ENCODE measurements at regions of chr2 and their contacts with region 1.

Region 1: GRCh38 chr2:195533771-195534642 is 123.0 kb upstream of the SLC39A10 start:
- DNase-seq: peak; percentile 10 to 72 (median 43)
- H3K4me3 ChIP-seq: peak overlapping the region; percentile 65
- H3K4me3 Mint-ChIP-seq: peak overlapping the region; percentile 75 to 86 (median 79)
- H3K27ac ChIP-seq: peak overlapping the region; percentile 19
- H3K27ac Mint-ChIP-seq: peak overlapping the region; percentile 83 to 97 (median 92)
- H3K4me1 ChIP-seq: peaks cover 78% of the 10 kb centered on the region
- H3K4me1 Mint-ChIP-seq: peaks cover 83 to 89% (median 89%) of the 10 kb centered on the region in 3 donors
- H3K27me3 ChIP-seq: no peaks in the 10 kb centered on the region
- H3K27me3 Mint-ChIP-seq: no peaks in the 10 kb centered on the region

Region 2: DNA sequence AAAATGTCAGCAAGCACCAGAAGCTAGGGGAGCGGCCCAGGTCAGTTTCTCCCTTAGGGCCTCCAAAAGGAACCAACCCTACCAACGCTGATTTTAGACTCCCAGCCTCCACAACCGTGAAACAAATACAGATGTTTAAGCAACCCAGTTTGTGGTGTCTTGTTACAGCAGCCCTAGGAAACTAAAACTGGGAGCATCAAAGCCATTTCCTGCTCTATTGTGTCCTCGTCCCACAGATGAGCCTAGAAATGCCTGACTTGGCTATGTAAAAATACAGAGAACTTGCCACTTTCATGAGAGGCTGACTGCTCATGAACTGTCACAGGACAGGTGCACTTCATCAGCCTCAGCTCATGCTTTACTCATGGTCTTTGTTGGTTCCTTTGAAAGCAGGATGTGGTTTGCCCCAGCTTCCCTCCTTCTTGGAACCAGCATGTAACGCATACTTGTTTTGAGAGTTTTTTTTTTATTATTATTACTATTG is 25.5 kb after region 1 on chr2:
- CTCF ChIA-PET with region 1: interaction called, 24 read pairs
- POLR2A ChIA-PET with region 1: interaction called, 56 read pairs
- DNase-seq: peak; percentile 46 to 87 (median 84)
- H3K4me3 ChIP-seq: no peak overlapping the region
- H3K4me3 Mint-ChIP-seq: peak overlapping the region; percentile 38 to 84 (median 73)
- H3K27ac ChIP-seq: peak overlapping the region; percentile 15
- H3K27ac Mint-ChIP-seq: peak overlapping the region; percentile 69 to 97 (median 94)
- H3K4me1 ChIP-seq: peaks cover 77% of the 10 kb centered on the region
- H3K4me1 Mint-ChIP-seq: peaks cover 62 to 79% (median 78%) of the 10 kb centered on the region in 3 donors
- H3K27me3 ChIP-seq: no peaks in the 10 kb centered on the region
- H3K27me3 Mint-ChIP-seq: no peaks in the 10 kb centered on the region

Region 3: DNA sequence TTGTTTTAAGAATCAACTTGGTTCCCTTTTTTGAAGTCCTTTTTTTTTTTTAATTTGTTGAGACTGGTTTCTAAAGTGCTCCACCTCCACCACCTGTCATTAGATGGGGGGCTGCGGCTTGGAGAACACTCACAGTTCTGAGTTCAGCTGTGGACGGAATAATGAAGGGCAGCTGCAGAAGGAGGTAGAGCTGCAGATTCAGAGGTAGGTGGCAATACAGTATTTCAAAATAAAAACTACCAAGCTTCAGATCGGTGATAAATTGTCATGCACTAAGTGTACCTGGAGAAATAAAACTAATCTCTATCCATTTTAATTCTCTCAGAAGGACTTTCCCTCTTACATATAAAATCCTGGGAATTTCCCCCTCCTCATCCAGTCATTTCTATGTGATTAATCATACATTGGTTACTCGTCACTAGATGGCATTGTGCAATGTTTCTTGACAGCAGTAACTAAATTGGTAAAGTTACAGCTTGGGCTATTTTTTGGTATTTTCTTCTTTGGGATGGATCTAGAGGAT is 41.9 kb after region 1 on chr2:
- CTCF ChIA-PET with region 1: interaction called, 11 read pairs
- POLR2A ChIA-PET with region 1: no interaction called
- DNase-seq: peak in 1 of 5 donors; percentile 21
- H3K4me3 ChIP-seq: no peak overlapping the region
- H3K4me3 Mint-ChIP-seq: peak overlapping the region in 6 of 7 donors; percentile 26 to 80 (median 52)
- H3K27ac ChIP-seq: no peak overlapping the region
- H3K27ac Mint-ChIP-seq: peak overlapping the region in 7 of 8 donors; percentile 18 to 84 (median 23)
- H3K4me1 ChIP-seq: peaks cover 49% of the 10 kb centered on the region
- H3K4me1 Mint-ChIP-seq: peaks cover 52 to 73% (median 69%) of the 10 kb centered on the region in 3 donors
- H3K27me3 ChIP-seq: no peaks in the 10 kb centered on the region
- H3K27me3 Mint-ChIP-seq: no peaks in the 10 kb centered on the region